Upper lobe of right lung (tissue), 1 donor: ENCODE measurements at regions of chr7 and their contacts with region 1.

Region 1: DNA sequence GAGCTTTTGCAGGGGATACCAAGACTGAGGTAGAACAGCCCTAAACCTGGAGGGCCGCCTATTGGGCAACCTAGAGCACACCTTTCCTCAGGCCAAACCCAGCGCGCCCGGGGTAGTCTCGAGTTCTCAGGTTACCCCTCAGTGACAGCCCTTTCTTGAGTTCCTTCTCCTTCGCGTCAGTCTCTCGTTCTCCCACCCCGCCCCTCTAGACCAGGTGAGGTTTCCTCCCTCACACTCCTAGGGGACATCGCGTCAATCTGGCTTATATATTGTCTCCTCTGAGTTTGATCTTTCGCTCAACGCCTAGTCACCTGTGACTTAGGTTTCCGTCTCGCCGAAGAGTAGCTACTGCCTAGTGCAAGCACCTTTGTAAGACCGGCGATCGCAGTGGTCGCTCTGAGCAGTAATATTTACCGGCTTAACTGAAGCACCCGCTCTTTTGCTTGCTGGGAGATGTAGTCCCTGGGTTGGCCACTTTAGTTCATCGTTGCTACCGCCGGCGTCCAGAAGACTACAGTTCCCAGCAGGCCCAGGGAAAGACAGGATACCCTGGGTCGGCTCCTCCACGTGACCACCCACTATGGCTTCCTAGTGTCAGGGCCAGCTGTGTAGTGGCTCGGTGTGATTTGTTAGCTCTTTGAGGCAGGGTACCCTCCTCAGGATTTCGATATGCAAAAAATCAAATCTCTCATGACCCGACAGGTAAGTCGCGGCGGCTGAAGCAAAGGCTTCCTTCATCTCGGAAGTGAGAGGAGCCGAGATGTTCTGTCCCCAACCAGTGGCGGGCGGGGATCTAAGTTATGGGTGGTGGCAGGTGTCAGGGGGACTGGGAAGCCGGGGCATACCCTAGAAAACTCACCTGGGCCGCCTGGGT is at the start of gene VPS50:
- DNase-seq: peak; percentile 95
- ATAC-seq: peak; percentile 99
- H3K4me3 ChIP-seq: peak within 1 kb of the TSS; percentile 85
- H3K27ac ChIP-seq: peak within 1 kb of the TSS; percentile 84
- H3K4me1 ChIP-seq: peaks cover 17% of the 10 kb centered on the region
- H3K27me3 ChIP-seq: no peaks in the 10 kb centered on the region
- CTCF ChIP-seq: no peak
- total RNA-seq, gene VPS50: 30.2 TPM

Region 2: GRCh38 chr7:93147363-93147762 is 84.7 kb before region 1 on chr7:
- intact Hi-C with region 1: no loop called
- DNase-seq: no peak
- ATAC-seq: peak; percentile 81
- H3K4me3 ChIP-seq: peak overlapping the region; percentile 64
- H3K27ac ChIP-seq: peak overlapping the region; percentile 75
- H3K4me1 ChIP-seq: peaks cover 20% of the 10 kb centered on the region
- H3K27me3 ChIP-seq: no peaks in the 10 kb centered on the region
- CTCF ChIP-seq: no peak

Region 3: GRCh38 chr7:94004024-94004951 is 772.3 kb after region 1 on chr7 and contains the start of gene BET1:
- intact Hi-C with region 1: loop called (anchors 10 kb)
- DNase-seq: peak; percentile 97
- ATAC-seq: peak; percentile 100
- H3K4me3 ChIP-seq: peak within 1 kb of the TSS; percentile 93
- H3K27ac ChIP-seq: peak within 1 kb of the TSS; percentile 95
- H3K4me1 ChIP-seq: peaks cover 30% of the 10 kb centered on the region
- H3K27me3 ChIP-seq: peaks cover 4% of the 10 kb centered on the region
- CTCF ChIP-seq: no peak
- total RNA-seq, gene BET1: 24.3 TPM